Activated CD4-positive, alpha-beta T cell treated with anti-CD3 and anti-CD28 coated beads for 36 hours (primary cell): ENCODE measurements at regions of chr1 and their contacts with region 1.

Region 1: DNA sequence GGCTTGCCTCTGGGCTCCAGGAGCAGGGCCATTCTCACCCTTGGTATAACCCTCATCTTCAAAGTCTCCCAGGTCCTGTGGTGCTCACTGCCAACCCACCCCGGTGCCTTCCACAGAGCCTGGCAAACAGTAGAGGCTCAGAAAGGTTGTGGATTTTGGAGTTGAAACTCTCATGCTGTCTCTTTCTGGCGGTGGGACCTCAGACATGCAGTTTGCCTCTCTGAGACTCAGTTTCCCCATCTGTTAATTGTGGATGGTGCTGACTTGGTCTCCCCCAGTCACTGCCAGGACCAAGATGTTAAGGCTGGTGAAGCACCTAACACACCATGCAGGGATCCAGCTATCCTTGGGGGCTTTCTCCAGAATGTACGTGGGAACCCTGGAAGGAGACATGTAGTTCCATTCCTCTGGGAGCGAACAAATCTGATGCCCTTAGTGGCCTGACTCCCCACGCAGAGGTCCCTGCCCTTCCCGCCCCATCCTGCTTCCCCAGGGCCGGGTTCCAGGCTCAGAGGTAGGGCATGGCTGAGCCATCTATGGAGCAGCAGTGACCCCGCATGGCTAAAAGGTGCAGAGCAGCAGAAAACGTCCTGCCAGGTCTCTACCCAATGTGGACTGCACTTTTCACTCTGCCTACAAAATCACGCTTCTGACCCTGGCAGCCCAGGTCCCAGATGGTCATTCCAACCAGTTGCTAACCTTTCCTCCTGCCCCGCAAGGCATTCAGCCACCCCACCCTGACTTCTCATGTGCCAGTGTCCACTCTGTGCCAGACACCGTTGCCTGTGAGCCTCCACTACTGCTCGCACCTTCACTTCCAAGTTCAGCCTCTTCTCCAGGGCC is 9.2 kb upstream of the TTC22 start:
- DNase-seq: peak; percentile 84
- ATAC-seq: peak; percentile 91
- H3K4me3 Mint-ChIP-seq: no peak overlapping the region
- H3K27ac Mint-ChIP-seq: no peak overlapping the region
- H3K4me1 Mint-ChIP-seq: peaks cover 3% of the 10 kb centered on the region
- H3K27me3 Mint-ChIP-seq: no peaks in the 10 kb centered on the region

Region 2: DNA sequence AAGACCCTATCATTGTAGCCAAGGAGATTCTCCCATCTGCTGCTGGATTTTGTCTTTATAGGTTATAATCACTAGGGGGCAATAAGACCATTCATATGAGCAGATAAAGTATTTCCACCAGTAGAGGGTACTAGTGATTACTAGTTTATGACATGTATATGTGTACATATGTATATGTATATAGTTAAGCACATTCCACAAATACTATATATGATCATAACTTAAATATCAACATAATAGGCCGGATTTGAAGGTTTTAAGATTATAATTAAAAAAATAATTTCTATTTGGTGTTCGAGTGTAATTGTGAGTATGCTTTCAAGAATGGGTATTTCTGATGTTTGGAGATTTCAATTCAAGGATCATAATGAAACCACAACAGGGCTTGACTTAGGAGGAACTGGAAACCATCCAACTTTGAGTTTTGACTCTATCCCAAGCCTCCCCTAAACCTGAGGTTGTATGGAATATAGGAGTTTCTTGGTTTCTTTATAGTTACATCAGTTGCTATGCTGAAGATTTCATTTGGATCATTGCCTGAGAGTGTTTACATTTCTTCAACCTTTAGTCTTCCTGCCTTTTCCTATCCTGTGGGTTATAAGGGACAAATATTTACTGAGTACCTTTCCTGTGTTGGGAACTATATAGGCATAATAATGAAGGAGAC is 740.0 kb before region 1 on chr1:
- CTCF ChIA-PET with region 1: no interaction called
- POLR2A ChIA-PET with region 1: no interaction called
- intact Hi-C with region 1: loop called in 1 of 2 experiments (anchors 2 kb)
- DNase-seq: no peak
- ATAC-seq: peak; percentile 97
- H3K4me3 Mint-ChIP-seq: no peak overlapping the region
- H3K27ac Mint-ChIP-seq: no peak overlapping the region
- H3K4me1 Mint-ChIP-seq: no peaks in the 10 kb centered on the region
- H3K27me3 Mint-ChIP-seq: no peaks in the 10 kb centered on the region

Region 3: GRCh38 chr1:54121482-54122134 is 688.7 kb before region 1 on chr1:
- CTCF ChIA-PET with region 1: no interaction called
- POLR2A ChIA-PET with region 1: no interaction called
- intact Hi-C with region 1: loop called in 1 of 2 experiments (anchors 2 kb)
- DNase-seq: peak; percentile 84
- ATAC-seq: peak; percentile 92
- H3K4me3 Mint-ChIP-seq: no peak overlapping the region
- H3K27ac Mint-ChIP-seq: no peak overlapping the region
- H3K4me1 Mint-ChIP-seq: peaks cover 4% of the 10 kb centered on the region
- H3K27me3 Mint-ChIP-seq: no peaks in the 10 kb centered on the region

Region 4: DNA sequence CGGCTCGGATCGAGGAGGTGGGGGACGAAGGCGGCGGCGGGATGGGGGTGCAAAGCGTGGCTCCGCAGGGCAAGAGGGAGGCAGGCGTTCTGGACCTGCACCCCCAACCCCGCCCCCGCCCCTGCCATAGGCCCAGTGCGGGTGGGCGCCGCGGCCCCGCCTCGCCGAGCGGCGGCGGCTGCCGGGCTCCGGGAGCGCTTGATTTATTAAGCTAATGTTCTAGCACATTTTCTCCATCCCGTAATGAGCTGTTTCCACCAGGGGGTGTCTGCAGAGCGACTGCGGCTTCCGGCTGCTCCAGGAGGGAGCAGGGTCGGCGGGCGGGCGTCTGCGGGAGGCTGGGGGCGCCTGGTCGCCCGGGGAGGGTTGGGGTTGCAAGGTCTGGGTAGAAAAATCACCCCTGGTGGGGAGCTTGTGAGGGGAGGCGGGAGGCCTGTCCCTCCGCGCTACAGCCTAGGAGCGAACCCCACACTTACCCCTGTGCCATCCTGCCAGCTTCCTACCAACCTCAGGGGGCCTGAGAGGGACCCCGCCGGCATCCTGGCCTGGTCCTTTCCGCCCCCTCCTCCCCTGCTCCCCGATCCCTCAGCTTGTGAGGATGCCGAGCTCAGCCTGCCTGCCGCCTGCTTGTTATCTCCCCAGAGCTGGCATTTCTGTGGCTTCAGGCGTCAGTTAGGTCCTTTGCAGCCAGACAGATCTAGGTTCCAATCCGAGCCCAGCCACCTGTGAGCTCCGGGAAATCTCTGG is 310.8 kb before region 1 on chr1:
- CTCF ChIA-PET with region 1: no interaction called
- POLR2A ChIA-PET with region 1: no interaction called
- intact Hi-C with region 1: loop called (anchors 1 to 10 kb)
- DNase-seq: peak; percentile 60
- ATAC-seq: peak; percentile 80
- H3K4me3 Mint-ChIP-seq: peak overlapping the region; percentile 57
- H3K27ac Mint-ChIP-seq: no peak overlapping the region
- H3K4me1 Mint-ChIP-seq: peaks cover 5% of the 10 kb centered on the region
- H3K27me3 Mint-ChIP-seq: peaks cover 16% of the 10 kb centered on the region

Region 5: DNA sequence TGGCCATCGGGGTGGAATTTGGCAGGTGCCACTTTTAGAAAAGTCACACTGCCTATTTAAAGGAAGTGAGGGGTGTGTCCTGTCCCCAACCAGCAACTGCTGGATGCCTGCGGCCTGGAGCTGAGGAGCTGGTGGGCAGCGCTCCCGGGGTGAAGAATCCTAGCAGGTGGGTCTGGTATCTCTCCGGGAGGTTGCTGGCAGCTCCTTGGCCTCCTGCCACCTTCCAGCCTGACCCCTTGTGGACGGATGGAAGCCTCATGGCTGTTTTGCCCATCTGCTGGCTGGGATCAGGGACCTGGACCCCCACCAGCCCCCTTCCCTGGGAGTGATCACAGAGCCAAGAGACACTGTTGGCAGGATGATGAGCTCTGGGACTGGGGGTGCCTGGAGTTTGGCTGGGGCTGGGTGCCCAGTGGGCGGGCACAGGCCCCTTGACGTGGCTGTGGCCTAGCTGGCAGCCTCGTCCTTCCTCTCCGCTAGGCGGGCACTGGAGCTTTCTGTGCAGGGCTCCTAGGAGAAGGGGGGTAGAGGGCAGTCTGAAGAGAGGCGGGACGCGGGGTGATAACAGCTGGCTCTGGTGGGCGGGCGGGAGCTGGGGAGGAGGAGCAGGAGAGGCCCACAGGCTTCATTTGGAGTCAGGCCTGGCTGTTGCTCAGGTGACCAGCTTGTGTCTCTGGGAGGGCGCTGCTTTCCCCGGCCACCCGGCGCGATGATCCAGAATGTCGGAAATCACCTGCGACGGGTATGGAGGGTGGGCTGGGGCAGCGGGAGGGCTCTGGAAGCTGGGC is 262.5 kb before region 1 on chr1 and contains the start of gene ACOT11:
- CTCF ChIA-PET with region 1: no interaction called
- POLR2A ChIA-PET with region 1: no interaction called
- intact Hi-C with region 1: no loop called
- DNase-seq: no peak
- ATAC-seq: no peak
- H3K4me3 Mint-ChIP-seq: no peak within 1 kb of the TSS
- H3K27ac Mint-ChIP-seq: no peak within 1 kb of the TSS
- H3K4me1 Mint-ChIP-seq: peaks cover 9% of the 10 kb centered on the region
- H3K27me3 Mint-ChIP-seq: no peaks in the 10 kb centered on the region
- total RNA-seq, gene ACOT11: 2.0 TPM

Region 6: GRCh38 chr1:54671985-54672608 is 138.2 kb before region 1 on chr1:
- CTCF ChIA-PET with region 1: interaction called, 10 read pairs
- POLR2A ChIA-PET with region 1: no interaction called
- intact Hi-C with region 1: loop called (anchors 1 kb)
- DNase-seq: peak; percentile 84
- ATAC-seq: peak; percentile 96
- H3K4me3 Mint-ChIP-seq: no peak overlapping the region
- H3K27ac Mint-ChIP-seq: no peak overlapping the region
- H3K4me1 Mint-ChIP-seq: no peaks in the 10 kb centered on the region
- H3K27me3 Mint-ChIP-seq: no peaks in the 10 kb centered on the region

Region 7: DNA sequence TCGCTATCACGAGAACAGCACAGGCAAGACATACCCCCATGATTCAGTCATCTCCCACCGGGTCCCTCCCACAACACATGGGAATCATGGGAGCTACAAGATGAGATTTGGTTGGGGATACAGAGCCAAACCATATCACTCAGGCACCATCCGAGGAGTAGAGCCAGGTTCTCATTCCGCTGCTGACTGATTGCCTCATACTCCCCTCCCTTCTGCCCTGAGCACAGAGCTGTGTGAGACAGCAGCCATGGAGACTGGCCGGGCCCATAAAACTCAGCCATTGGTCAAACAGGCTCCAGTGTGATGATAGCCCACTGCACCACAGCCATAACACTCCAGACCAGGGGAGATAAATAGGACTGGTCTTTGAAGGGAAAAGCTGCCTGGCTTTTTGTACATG is 72.1 kb before region 1 on chr1:
- CTCF ChIA-PET with region 1: no interaction called
- POLR2A ChIA-PET with region 1: no interaction called
- intact Hi-C with region 1: no loop called
- DNase-seq: no peak
- ATAC-seq: no peak
- H3K4me3 Mint-ChIP-seq: no peak overlapping the region
- H3K27ac Mint-ChIP-seq: no peak overlapping the region
- H3K4me1 Mint-ChIP-seq: no peaks in the 10 kb centered on the region
- H3K27me3 Mint-ChIP-seq: no peaks in the 10 kb centered on the region

Region 8: GRCh38 chr1:54764133-54764921 is 46.0 kb before region 1 on chr1 and contains the start of gene PARS2:
- CTCF ChIA-PET with region 1: interaction called, 3 read pairs
- POLR2A ChIA-PET with region 1: no interaction called
- intact Hi-C with region 1: loop called in 1 of 2 experiments (anchors 1 kb)
- DNase-seq: peak; percentile 98
- ATAC-seq: peak; percentile 99
- H3K4me3 Mint-ChIP-seq: peak within 1 kb of the TSS; percentile 89
- H3K27ac Mint-ChIP-seq: peak within 1 kb of the TSS; percentile 91
- H3K4me1 Mint-ChIP-seq: peaks cover 13% of the 10 kb centered on the region
- H3K27me3 Mint-ChIP-seq: no peaks in the 10 kb centered on the region
- total RNA-seq, gene PARS2: 6.3 to 6.8 TPM